ENCODE measurements at regions of chr7 and their contacts with region 1.

Region 1: GRCh38 chr7:139645572-139646523 is 122.4 kb downstream of the CLEC2L start:
- DNase-seq: peak; percentile 87
- H3K4me3 Mint-ChIP-seq: no peak overlapping the region
- H3K27ac Mint-ChIP-seq: no peak overlapping the region
- H3K4me1 Mint-ChIP-seq: peaks cover 49% of the 10 kb centered on the region
- H3K27me3 Mint-ChIP-seq: no peaks in the 10 kb centered on the region

Region 2: GRCh38 chr7:139635526-139636302 is 10.1 kb before region 1 on chr7:
- CTCF ChIA-PET with region 1: interaction called, 18 read pairs
- POLR2A ChIA-PET with region 1: interaction called, 3 read pairs
- intact Hi-C with region 1: no loop called
- DNase-seq: peak; percentile 72
- H3K4me3 Mint-ChIP-seq: peak overlapping the region; percentile 42
- H3K27ac Mint-ChIP-seq: peak overlapping the region; percentile 63
- H3K4me1 Mint-ChIP-seq: peaks cover 26% of the 10 kb centered on the region
- H3K27me3 Mint-ChIP-seq: no peaks in the 10 kb centered on the region

Region 3: GRCh38 chr7:139680676-139681462 is 35.0 kb after region 1 on chr7:
- CTCF ChIA-PET with region 1: interaction called, 26 read pairs
- POLR2A ChIA-PET with region 1: interaction called, 7 read pairs
- intact Hi-C with region 1: loop called (anchors 1 kb)
- DNase-seq: peak; percentile 92
- H3K4me3 Mint-ChIP-seq: no peak overlapping the region
- H3K27ac Mint-ChIP-seq: peak overlapping the region; percentile 94
- H3K4me1 Mint-ChIP-seq: peaks cover 48% of the 10 kb centered on the region
- H3K27me3 Mint-ChIP-seq: no peaks in the 10 kb centered on the region

Region 4: GRCh38 chr7:139777948-139778841 is 132.3 kb after region 1 on chr7 and contains the start of gene HIPK2:
- CTCF ChIA-PET with region 1: interaction called, 6 read pairs
- POLR2A ChIA-PET with region 1: interaction called, 3 read pairs
- intact Hi-C with region 1: loop called (anchors 1 kb)
- DNase-seq: peak; percentile 74
- H3K4me3 Mint-ChIP-seq: peak within 1 kb of the TSS; percentile 95
- H3K27ac Mint-ChIP-seq: peak within 1 kb of the TSS; percentile 90
- H3K4me1 Mint-ChIP-seq: peaks cover 36% of the 10 kb centered on the region
- H3K27me3 Mint-ChIP-seq: peaks cover 15% of the 10 kb centered on the region
- total RNA-seq, gene HIPK2: 18.9 to 19.1 TPM

Region 5: DNA sequence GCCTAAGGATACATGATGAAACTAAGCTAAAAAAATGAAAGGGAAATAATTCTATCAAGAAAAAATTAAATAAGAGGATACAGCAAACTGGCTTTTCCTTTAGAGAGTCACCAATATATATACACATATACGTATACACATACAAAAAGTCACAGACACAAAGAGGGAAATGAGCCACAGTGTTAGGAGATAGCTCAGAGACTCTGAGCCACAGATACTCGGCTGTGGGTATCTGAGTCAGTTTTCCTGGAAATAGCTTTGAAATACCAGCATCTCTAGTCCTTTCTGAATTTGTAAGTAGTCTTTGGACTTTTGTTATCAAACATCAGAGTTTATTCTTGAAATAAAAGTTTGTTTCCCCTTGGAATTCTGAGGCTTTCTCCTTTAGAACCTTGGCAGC is 295.0 kb after region 1 on chr7:
- CTCF ChIA-PET with region 1: interaction called, 10 read pairs
- POLR2A ChIA-PET with region 1: no interaction called
- intact Hi-C with region 1: no loop called
- DNase-seq: peak; percentile 55
- H3K4me3 Mint-ChIP-seq: no peak overlapping the region
- H3K27ac Mint-ChIP-seq: no peak overlapping the region
- H3K4me1 Mint-ChIP-seq: peaks cover 6% of the 10 kb centered on the region
- H3K27me3 Mint-ChIP-seq: no peaks in the 10 kb centered on the region

Region 6: DNA sequence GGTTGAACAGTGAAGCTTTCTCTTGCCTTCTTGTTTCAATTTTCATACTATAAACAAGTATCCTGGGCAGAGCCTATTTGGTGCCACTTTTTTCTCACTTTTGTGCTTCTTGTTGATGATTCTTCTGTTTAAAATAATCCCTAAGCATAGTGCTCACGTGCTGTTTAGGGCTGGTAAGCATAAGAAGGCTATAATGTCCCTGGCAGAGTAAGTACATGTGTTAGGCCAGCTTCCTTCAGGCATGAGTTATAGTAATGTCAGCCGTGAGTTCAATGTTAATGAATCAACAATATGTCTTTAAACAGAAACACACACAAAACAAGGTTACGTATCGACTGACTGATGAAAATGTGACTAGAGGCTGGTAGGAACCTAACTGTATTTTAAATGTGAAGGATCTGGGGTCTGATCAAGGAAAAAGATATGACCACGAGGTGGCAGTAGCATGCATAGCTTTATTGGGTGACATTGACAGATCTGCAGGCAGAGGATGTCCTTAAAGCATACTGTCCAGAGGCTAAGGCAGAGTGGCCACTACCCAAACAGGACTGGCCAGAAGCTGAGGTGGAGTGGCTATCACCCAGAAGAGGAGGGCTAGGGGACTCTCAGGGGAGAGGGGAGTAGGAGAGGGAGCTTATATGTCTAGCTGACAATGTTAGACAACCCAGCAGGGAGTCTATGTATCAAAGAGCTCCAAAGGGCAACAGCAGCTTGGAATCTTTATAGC is 1165.1 kb after region 1 on chr7:
- CTCF ChIA-PET with region 1: no interaction called
- POLR2A ChIA-PET with region 1: no interaction called
- intact Hi-C with region 1: no loop called
- DNase-seq: peak; percentile 58
- H3K4me3 Mint-ChIP-seq: no peak overlapping the region
- H3K27ac Mint-ChIP-seq: no peak overlapping the region
- H3K4me1 Mint-ChIP-seq: no peaks in the 10 kb centered on the region
- H3K27me3 Mint-ChIP-seq: no peaks in the 10 kb centered on the region

Measured in activated CD4-positive, alpha-beta memory T cell treated with anti-CD3 and anti-CD28 coated beads for 36 hours (primary cell).